ENCODE measurements at regions of chr16 and their contacts with region 1.

Region 1: DNA sequence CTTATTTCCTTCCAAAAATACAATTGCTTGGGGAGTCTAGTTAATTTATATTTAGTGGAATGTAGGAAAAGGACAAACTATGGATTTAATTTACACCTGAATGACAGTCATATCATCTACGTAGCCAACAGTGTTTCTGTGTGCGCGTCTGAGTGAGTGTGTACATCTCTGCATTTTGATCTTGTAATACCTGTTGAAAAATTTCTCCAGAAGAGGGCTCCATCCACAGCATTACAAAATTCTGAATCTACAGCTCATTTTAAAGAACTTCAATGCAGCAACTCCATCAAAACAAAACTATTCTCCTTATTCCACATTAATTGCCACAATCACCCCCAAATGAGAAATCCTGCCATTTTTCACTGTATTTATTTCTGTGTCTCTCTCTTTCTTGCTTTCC is 3.9 kb downstream of the CDH13 start:
- DNase-seq: no peak
- H3K4me3 ChIP-seq: peak overlapping the region in 1 of 59 donors; percentile 11
- H3K27ac ChIP-seq: peak overlapping the region in 1 of 59 donors; percentile 31
- H3K27me3 ChIP-seq: peaks cover 0 to 15% (median 0%) of the 10 kb centered on the region in 45 donors
- CTCF ChIP-seq: peak; percentile 23 to 73 (median 55)

Region 2: DNA sequence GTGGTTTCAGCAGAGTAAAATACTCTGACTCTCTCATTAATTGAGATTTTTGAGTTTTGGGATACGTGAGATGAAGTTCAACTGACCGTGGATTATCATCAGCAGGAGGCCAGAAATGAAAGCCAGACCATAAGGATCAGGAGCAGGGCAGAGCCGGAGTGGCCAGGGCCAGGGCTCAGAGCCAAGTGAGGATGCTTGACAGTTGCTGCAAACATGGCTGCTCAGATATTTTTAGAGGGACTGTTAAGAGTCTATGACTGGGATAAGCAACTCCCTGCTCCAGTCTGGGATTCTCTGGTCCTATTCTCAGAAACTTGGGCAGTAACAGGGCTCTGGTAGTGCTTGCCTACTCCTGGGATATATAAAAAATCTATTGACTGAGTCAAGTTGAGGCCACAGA is 21.5 kb before region 1 on chr16:
- intact Hi-C with region 1: no loop called
- DNase-seq: no peak
- H3K4me3 ChIP-seq: no peak overlapping the region
- H3K27ac ChIP-seq: no peak overlapping the region
- H3K27me3 ChIP-seq: peaks cover 0 to 14% (median 0%) of the 10 kb centered on the region in 45 donors
- CTCF ChIP-seq: no peak

Region 3: DNA sequence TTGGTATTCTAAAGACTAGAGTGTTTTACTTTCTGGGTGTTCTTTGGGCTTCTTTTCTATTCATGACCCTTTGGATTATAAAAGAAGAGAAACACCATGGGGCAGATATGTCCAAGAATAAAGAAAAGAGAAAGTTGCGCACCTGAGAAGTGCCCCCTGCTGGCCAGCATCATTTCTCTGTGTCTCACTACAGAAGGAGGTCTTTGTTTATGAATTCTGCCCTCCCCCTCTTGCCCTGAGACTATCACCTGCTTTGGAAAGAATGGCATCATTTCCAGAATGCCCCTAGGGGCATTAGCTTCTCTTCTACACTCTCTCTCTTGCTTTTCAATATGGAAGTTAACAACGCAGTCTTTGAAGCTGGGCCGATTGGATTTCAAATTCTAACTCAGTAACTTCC is 41.1 kb after region 1 on chr16:
- intact Hi-C with region 1: no loop called
- DNase-seq: peak in 1 of 10 donors; percentile 42
- H3K4me3 ChIP-seq: no peak overlapping the region
- H3K27ac ChIP-seq: no peak overlapping the region
- H3K27me3 ChIP-seq: peaks cover 0 to 7% (median 0%) of the 10 kb centered on the region in 45 donors
- CTCF ChIP-seq: peak in 31 of 56 donors; percentile 11 to 56 (median 28)

Region 4: DNA sequence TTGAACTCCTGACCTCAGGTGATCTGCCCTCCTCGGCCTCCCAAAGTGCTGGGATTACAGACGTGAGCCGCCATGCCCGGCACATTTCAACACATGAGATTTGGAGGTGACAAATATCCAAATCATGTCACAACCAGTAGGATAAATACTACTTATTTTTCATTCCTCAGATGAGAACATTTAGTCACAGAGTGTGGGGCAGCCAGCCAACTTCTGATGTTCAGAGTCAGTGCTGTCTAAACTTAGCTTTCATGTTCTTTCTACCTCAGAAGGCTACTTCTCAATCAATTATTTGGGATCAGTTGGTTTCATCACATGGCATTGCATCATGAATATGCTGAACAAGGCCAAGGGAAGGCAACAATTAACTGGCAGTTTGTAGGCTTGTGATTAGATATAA is 130.5 kb after region 1 on chr16:
- intact Hi-C with region 1: no loop called
- DNase-seq: peak in 9 of 10 donors; percentile 7 to 86 (median 65)
- H3K4me3 ChIP-seq: no peak overlapping the region
- H3K27ac ChIP-seq: peak overlapping the region in 31 of 59 donors; percentile 1 to 75 (median 43)
- H3K27me3 ChIP-seq: no peaks in the 10 kb centered on the region
- CTCF ChIP-seq: no peak

Region 5: DNA sequence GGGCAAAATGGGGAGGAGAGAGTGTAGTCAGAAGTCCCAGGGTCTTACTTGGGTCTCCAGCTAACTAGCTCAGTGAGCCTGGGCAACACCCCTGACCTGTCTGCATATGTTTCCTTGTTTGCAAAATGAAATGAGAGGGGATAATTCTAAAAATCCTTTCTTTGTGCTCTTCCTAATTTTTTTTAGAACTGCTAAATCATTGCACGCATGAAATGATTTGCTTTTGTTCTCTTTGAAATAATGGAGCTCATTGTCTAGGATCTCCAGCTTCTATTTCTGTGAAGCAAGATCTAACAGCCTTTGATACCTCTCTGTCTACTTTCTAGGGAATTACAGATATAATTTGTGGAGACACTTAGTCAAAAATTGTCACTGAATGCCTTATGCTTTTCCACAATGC is 177.3 kb after region 1 on chr16:
- intact Hi-C with region 1: loop called (anchors 5 to 10 kb)
- DNase-seq: no peak
- H3K4me3 ChIP-seq: peak overlapping the region in 16 of 59 donors; percentile 4 to 43 (median 23)
- H3K27ac ChIP-seq: peak overlapping the region in 43 of 59 donors; percentile 14 to 87 (median 62)
- H3K27me3 ChIP-seq: peaks cover 0 to 6% (median 0%) of the 10 kb centered on the region in 45 donors
- CTCF ChIP-seq: peak in 15 of 56 donors; percentile 5 to 49 (median 16)